ENCODE measurements at regions of chr6 and their contacts with region 1.

Region 1: DNA sequence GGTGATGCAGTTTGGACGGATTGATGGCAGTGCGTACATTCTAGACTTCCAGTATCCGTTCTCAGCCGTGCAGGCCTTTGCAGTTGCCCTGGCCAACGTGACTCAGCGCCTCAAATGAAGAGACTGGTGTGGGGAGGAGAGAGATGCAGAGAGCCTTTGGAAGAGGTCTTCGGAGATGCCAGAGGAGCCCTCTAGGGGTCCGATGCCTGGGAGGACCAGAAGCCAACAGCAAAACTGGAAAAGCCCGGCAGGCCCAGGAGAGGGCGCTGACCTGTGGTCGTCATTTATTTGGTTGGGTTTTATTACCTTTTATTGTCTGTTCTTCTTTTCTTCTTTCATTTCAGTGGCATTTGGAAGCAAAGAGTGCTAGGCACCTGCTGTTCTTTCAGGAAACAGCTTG is 53.3 kb upstream of the TMEM181 start:
- DNase-seq: peak; percentile 45
- ATAC-seq: peak; percentile 87
- H3K4me3 ChIP-seq: no peak overlapping the region
- H3K27ac ChIP-seq: no peak overlapping the region
- H3K4me1 ChIP-seq: peaks cover 10% of the 10 kb centered on the region
- H3K27me3 ChIP-seq: no peaks in the 10 kb centered on the region
- CTCF ChIP-seq: peak; percentile 41
- EP300 ChIP-seq: no peak
- POLR2A ChIP-seq: no peak
- RAD21 ChIP-seq: peak; percentile 63

Region 2: GRCh38 chr6:158554611-158555361 is 48.2 kb after region 1 on chr6:
- CTCF ChIA-PET with region 1: no interaction called
- POLR2A ChIA-PET with region 1: no interaction called
- in situ Hi-C with region 1: no loop called
- intact Hi-C with region 1: no loop called
- DNase-seq: peak; percentile 96
- ATAC-seq: peak; percentile 84
- H3K4me3 ChIP-seq: peak overlapping the region in 2 of 3 experiments; percentile 13 to 33; a peak in 3 of 6 replicates
- H3K27ac ChIP-seq: peak overlapping the region; percentile 77
- H3K4me1 ChIP-seq: peaks cover 78% of the 10 kb centered on the region
- H3K27me3 ChIP-seq: no peaks in the 10 kb centered on the region
- CTCF ChIP-seq: 0 out of 2 replicates have a peak, but pooled peaks have one; percentile 14
- EP300 ChIP-seq: peak in 1 of 2 experiments; percentile 97; a peak in 2 of 4 replicates
- POLR2A ChIP-seq: no peak
- RAD21 ChIP-seq: no peak; the same call in 1 of the 2 replicates

Region 3: GRCh38 chr6:158575550-158575949 is 69.0 kb after region 1 on chr6:
- CTCF ChIA-PET with region 1: no interaction called
- POLR2A ChIA-PET with region 1: no interaction called
- in situ Hi-C with region 1: no loop called
- intact Hi-C with region 1: no loop called
- DNase-seq: no peak
- ATAC-seq: no peak
- H3K4me3 ChIP-seq: no peak overlapping the region
- H3K27ac ChIP-seq: no peak overlapping the region
- H3K4me1 ChIP-seq: peaks cover 58% of the 10 kb centered on the region
- H3K27me3 ChIP-seq: no peaks in the 10 kb centered on the region
- CTCF ChIP-seq: no peak
- EP300 ChIP-seq: no peak
- POLR2A ChIP-seq: no peak
- RAD21 ChIP-seq: no peak

Region 4: GRCh38 chr6:158605266-158605878 is 98.8 kb after region 1 on chr6:
- CTCF ChIA-PET with region 1: no interaction called
- POLR2A ChIA-PET with region 1: no interaction called
- in situ Hi-C with region 1: no loop called
- intact Hi-C with region 1: loop called (anchors 2 kb)
- DNase-seq: peak; percentile 72
- ATAC-seq: peak; percentile 73
- H3K4me3 ChIP-seq: no peak overlapping the region
- H3K27ac ChIP-seq: no peak overlapping the region
- H3K4me1 ChIP-seq: no peaks in the 10 kb centered on the region
- H3K27me3 ChIP-seq: no peaks in the 10 kb centered on the region
- CTCF ChIP-seq: peak; percentile 70
- EP300 ChIP-seq: no peak
- POLR2A ChIP-seq: no peak; a peak in 1 of 4 replicates
- RAD21 ChIP-seq: peak; percentile 67